Tibial artery (tissue), 4 donors: ENCODE measurements at regions of chr16 and their contacts with region 1.

Region 1: DNA sequence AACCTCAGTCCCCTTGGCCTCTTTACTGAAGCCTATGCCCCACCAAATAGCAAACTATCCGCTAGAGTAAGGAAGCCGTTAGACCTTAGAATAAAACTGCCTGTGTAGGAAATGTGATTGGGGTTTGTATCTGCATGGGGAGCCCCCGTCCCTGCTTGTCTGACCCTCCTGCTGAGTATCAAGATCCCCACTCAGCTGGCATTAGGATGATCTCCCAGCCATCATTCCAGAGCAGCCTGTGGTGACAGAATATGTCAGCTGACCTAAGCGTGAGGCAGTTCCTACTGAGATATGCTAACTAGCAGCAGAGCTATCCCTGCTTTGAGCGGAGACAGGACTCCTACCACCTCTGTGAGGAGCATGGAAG is 645 bp upstream of the GFOD2 start:
- DNase-seq: peak in 1 of 2 donors; percentile 47
- H3K4me3 ChIP-seq: peak overlapping the region; percentile 79 to 89
- H3K27ac ChIP-seq: peak overlapping the region; percentile 87 to 90
- H3K4me1 ChIP-seq: peaks cover 0 to 22% (median 17%) of the 10 kb centered on the region in 4 donors
- H3K27me3 ChIP-seq: no peaks in the 10 kb centered on the region
- CTCF ChIP-seq: no peak

Region 2: DNA sequence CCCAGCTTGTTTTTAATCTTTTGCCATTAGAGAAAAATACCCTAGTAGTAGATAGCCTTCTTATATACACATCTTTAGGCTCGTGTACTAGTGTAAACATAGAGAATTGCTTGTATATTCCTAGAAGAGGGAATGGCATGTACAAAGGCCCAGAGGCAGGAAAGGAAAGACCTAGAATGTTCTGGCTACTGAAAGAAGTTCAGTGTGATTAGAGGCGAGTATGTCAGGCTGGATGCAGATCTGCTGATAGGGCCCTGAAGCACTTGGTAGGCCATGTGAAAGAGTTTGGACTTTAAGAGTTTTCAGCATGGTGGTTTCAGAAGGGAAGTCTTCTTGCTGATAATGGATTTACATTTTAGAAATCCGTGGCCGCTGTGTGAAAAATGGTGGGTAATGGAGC is 140.1 kb before region 1 on chr16:
- intact Hi-C with region 1: no loop called
- DNase-seq: no peak
- H3K4me3 ChIP-seq: no peak overlapping the region
- H3K27ac ChIP-seq: no peak overlapping the region
- H3K4me1 ChIP-seq: no peaks in the 10 kb centered on the region
- H3K27me3 ChIP-seq: no peaks in the 10 kb centered on the region
- CTCF ChIP-seq: no peak

Region 3: GRCh38 chr16:67641779-67642708 is 77.7 kb before region 1 on chr16:
- intact Hi-C with region 1: no loop called
- DNase-seq: peak; percentile 61 to 92
- H3K4me3 ChIP-seq: no peak overlapping the region
- H3K27ac ChIP-seq: peak overlapping the region in 1 of 2 donors; percentile 20
- H3K4me1 ChIP-seq: peaks cover 3 to 23% (median 17%) of the 10 kb centered on the region in 4 donors
- H3K27me3 ChIP-seq: peaks cover 7 to 27% of the 10 kb centered on the region in 2 donors
- CTCF ChIP-seq: no peak

Region 4: GRCh38 chr16:67672739-67673662 is 46.8 kb before region 1 on chr16:
- intact Hi-C with region 1: loop called (anchors 5 kb)
- DNase-seq: peak in 1 of 2 donors; percentile 58
- H3K4me3 ChIP-seq: no peak overlapping the region
- H3K27ac ChIP-seq: peak overlapping the region in 1 of 2 donors; percentile 32
- H3K4me1 ChIP-seq: peaks cover 0 to 38% (median 6%) of the 10 kb centered on the region in 4 donors
- H3K27me3 ChIP-seq: no peaks in the 10 kb centered on the region
- CTCF ChIP-seq: peak; percentile 52 to 54

Region 5: GRCh38 chr16:67781565-67781921 is 61.8 kb after region 1 on chr16:
- intact Hi-C with region 1: no loop called
- DNase-seq: no peak
- H3K4me3 ChIP-seq: no peak overlapping the region
- H3K27ac ChIP-seq: no peak overlapping the region
- H3K4me1 ChIP-seq: peaks cover 0 to 12% (median 0%) of the 10 kb centered on the region in 4 donors
- H3K27me3 ChIP-seq: no peaks in the 10 kb centered on the region
- CTCF ChIP-seq: no peak